K562 (cell line): ENCODE measurements at regions of chr4 and their contacts with region 1.

Region 1: GRCh38 chr4:150242820-150243458 is 164.7 kb downstream of the DCLK2 start:
- DNase-seq: peak; percentile 41 to 68 (median 60)
- ATAC-seq: peak; percentile 80
- H3K4me3 ChIP-seq: no peak overlapping the region
- H3K27ac ChIP-seq: no peak overlapping the region
- H3K4me1 ChIP-seq: no peaks in the 10 kb centered on the region; a peak in 1 of 5 replicates
- H3K27me3 ChIP-seq: no peaks in the 10 kb centered on the region
- CTCF ChIP-seq: peak; percentile 69 to 86 (median 83)
- EP300 ChIP-seq: no peak
- POLR2A ChIP-seq: no peak
- RAD21 ChIP-seq: peak; percentile 35 to 70

Region 2: DNA sequence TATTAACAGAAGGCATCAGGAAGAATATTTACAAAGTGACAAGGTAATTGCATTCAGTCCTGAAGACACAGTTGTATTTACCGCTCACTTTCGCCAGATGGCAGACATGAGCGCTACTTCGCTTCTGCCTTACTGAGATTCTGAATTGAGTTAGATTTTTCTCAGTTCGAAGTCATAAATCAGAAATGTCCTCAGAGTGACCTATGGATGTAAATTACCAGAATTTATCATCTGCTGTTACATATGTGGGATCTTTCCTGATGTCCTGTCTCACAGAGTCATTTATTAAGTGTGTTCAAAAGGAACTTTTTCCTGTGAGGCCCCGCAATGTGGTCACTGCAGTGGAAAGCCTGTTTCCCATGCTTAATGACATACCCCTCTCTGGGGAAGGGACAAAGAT is 262.0 kb before region 1 on chr4:
- CTCF ChIA-PET with region 1: no interaction called
- POLR2A ChIA-PET with region 1: interaction called, 3 read pairs
- in situ Hi-C with region 1: no loop called
- intact Hi-C with region 1: loop called (anchors 2 kb)
- DNase-seq: peak; percentile 36 to 61 (median 44)
- ATAC-seq: peak; percentile 84
- H3K4me3 ChIP-seq: no peak overlapping the region
- H3K27ac ChIP-seq: no peak overlapping the region
- H3K4me1 ChIP-seq: no peaks in the 10 kb centered on the region; a peak in 1 of 5 replicates
- H3K27me3 ChIP-seq: no peaks in the 10 kb centered on the region
- CTCF ChIP-seq: peak; percentile 62 to 75 (median 67); a peak in 5 of 6 replicates
- EP300 ChIP-seq: no peak
- POLR2A ChIP-seq: no peak
- RAD21 ChIP-seq: peak; percentile 58 to 67

Region 3: GRCh38 chr4:149999485-150000074 is 243.4 kb before region 1 on chr4:
- CTCF ChIA-PET with region 1: no interaction called
- POLR2A ChIA-PET with region 1: no interaction called
- in situ Hi-C with region 1: no loop called
- intact Hi-C with region 1: loop called (anchors 1 kb)
- DNase-seq: peak in 2 of 4 experiments; percentile 10 to 17
- ATAC-seq: peak; percentile 54; the same call in 1 of the 3 replicates
- H3K4me3 ChIP-seq: no peak overlapping the region
- H3K27ac ChIP-seq: no peak overlapping the region
- H3K4me1 ChIP-seq: peaks cover 0 to 8% of the 10 kb centered on the region in 2 experiments; a peak in 1 of 5 replicates
- H3K27me3 ChIP-seq: no peaks in the 10 kb centered on the region
- CTCF ChIP-seq: peak; percentile 40 to 59 (median 47)
- EP300 ChIP-seq: no peak
- POLR2A ChIP-seq: no peak
- RAD21 ChIP-seq: peak in 1 of 2 experiments; percentile 48; a peak in 2 of 4 replicates

Region 4: GRCh38 chr4:150078637-150079581 is 164.0 kb before region 1 on chr4:
- CTCF ChIA-PET with region 1: no interaction called
- POLR2A ChIA-PET with region 1: no interaction called
- in situ Hi-C with region 1: no loop called
- intact Hi-C with region 1: no loop called
- DNase-seq: peak; percentile 2 to 17 (median 14)
- ATAC-seq: peak; percentile 36; the same call in 2 of the 3 replicates
- H3K4me3 ChIP-seq: no peak overlapping the region
- H3K27ac ChIP-seq: no peak overlapping the region
- H3K4me1 ChIP-seq: peaks cover 0 to 15% of the 10 kb centered on the region in 2 experiments; a peak in 2 of 5 replicates
- H3K27me3 ChIP-seq: peaks cover 2 to 23% of the 10 kb centered on the region in 2 experiments; a peak in 2 of 5 replicates
- CTCF ChIP-seq: no peak
- EP300 ChIP-seq: no peak
- POLR2A ChIP-seq: no peak
- RAD21 ChIP-seq: no peak